ENCODE measurements at regions of chr1 and their contacts with region 1.

Region 1: GRCh38 chr1:25608488-25609178 is 8.0 kb upstream of the MAN1C1 start:
- DNase-seq: peak; percentile 72 to 94 (median 85)
- ATAC-seq: peak; percentile 96 to 99 (median 97)
- H3K4me3 ChIP-seq: no peak overlapping the region
- H3K4me3 Mint-ChIP-seq: peak overlapping the region in 1 of 3 donors; percentile 33
- H3K27ac ChIP-seq: no peak overlapping the region
- H3K27ac Mint-ChIP-seq: no peak overlapping the region
- H3K4me1 ChIP-seq: peaks cover 3 to 5% of the 10 kb centered on the region in 2 experiments
- H3K4me1 Mint-ChIP-seq: peaks cover 13 to 15% (median 15%) of the 10 kb centered on the region in 3 donors
- H3K27me3 ChIP-seq: peaks cover 0 to 3% of the 10 kb centered on the region in 2 experiments
- H3K27me3 Mint-ChIP-seq: peaks cover 0 to 3% of the 10 kb centered on the region in 2 donors

Region 2: DNA sequence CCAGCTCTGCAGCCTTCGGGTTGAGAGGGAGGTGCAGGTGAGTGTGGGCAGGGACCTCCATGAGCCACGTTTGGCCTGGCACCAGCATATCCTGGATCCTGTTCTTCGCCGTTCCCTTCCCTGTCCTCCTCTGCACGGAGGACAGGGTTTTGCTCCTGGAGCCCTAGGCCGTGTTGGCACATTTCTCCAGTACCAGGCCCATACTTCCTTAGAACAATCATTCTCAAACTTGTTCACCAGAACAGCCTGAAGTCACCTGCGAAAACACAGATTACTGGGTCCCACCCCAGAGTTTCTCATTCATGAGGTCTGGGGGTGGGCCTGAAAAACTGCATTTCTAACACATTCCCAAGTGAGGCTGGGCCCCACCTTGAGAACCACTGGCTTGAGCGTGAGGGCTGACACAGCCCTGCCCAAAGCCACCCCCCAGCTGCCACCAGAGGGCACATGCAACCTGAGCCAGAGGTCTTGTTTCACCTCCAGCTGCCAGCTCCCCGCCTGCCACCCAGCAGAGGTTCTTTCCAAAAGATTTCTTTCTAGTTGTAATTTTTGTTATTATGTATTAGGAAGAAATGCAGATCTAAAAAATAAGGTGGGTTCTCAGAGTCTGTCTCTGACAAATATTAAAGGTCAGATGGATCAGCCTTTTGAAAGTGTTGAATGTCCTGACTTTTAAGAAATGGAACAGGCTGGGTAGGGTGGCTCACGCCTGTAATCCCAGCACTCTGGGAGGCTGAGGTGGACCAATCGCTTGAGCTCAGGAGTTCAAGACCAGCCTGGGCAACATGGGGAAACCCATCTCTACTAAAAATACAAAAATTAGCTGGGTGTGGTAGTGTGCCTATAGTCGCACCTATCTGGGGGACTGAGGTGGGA is 104.8 kb before region 1 on chr1:
- CTCF ChIA-PET with region 1: no interaction called
- POLR2A ChIA-PET with region 1: no interaction called
- DNase-seq: peak; percentile 55 to 83 (median 73)
- ATAC-seq: peak; percentile 94 to 98 (median 96)
- H3K4me3 ChIP-seq: no peak overlapping the region
- H3K4me3 Mint-ChIP-seq: no peak overlapping the region
- H3K27ac ChIP-seq: no peak overlapping the region
- H3K27ac Mint-ChIP-seq: peak overlapping the region; percentile 77 to 80
- H3K4me1 ChIP-seq: peaks cover 8 to 26% of the 10 kb centered on the region in 2 experiments
- H3K4me1 Mint-ChIP-seq: peaks cover 24 to 34% (median 32%) of the 10 kb centered on the region in 3 donors
- H3K27me3 ChIP-seq: no peaks in the 10 kb centered on the region
- H3K27me3 Mint-ChIP-seq: no peaks in the 10 kb centered on the region

Region 3: DNA sequence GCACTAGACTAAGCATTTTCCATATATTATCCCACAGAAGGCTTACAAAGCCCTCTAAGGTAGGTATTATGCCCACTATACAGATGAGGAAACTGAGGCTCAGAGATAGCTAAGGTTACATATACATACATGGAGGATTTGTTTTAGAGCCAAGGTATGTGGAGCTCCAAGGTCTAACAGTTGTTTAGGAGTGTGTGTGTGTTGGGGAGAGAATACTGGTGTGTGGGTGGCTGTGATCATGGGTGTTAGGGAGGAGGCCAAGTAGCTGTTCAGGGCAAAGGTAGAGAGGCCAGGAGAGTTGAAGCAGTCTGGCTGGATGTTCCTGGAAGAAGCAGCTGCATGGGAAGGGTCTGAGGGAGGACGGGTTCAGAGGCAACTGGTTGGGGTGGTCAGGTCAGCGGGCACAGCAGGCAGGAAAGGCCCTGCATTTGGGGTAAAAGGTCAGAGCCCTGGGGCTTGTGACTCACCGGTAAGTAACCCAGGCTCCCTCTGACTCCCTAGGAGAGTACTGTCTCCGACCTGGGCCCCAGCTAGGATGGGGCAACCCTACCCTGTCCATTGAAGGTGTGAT is 70.4 kb before region 1 on chr1:
- CTCF ChIA-PET with region 1: no interaction called
- POLR2A ChIA-PET with region 1: interaction called in 1 of 2 experiments, 13 read pairs
- DNase-seq: no peak
- ATAC-seq: no peak
- H3K4me3 ChIP-seq: no peak overlapping the region
- H3K4me3 Mint-ChIP-seq: no peak overlapping the region
- H3K27ac ChIP-seq: no peak overlapping the region
- H3K27ac Mint-ChIP-seq: peak overlapping the region in 1 of 2 donors; percentile 17
- H3K4me1 ChIP-seq: peaks cover 0 to 3% of the 10 kb centered on the region in 2 experiments
- H3K4me1 Mint-ChIP-seq: peaks cover 3 to 9% (median 6%) of the 10 kb centered on the region in 3 donors
- H3K27me3 ChIP-seq: no peaks in the 10 kb centered on the region
- H3K27me3 Mint-ChIP-seq: no peaks in the 10 kb centered on the region

Region 4: GRCh38 chr1:25642574-25643108 is 34.0 kb after region 1 on chr1:
- CTCF ChIA-PET with region 1: interaction called in 1 of 2 experiments, 11 read pairs
- POLR2A ChIA-PET with region 1: no interaction called
- DNase-seq: peak in 34 of 35 experiments; percentile 51 to 86 (median 75)
- ATAC-seq: peak; percentile 91 to 96 (median 94)
- H3K4me3 ChIP-seq: peak overlapping the region; percentile 25 to 64
- H3K4me3 Mint-ChIP-seq: peak overlapping the region; percentile 60 to 77 (median 64)
- H3K27ac ChIP-seq: peak overlapping the region; percentile 75
- H3K27ac Mint-ChIP-seq: peak overlapping the region; percentile 91 to 92
- H3K4me1 ChIP-seq: peaks cover 61 to 63% of the 10 kb centered on the region in 2 experiments
- H3K4me1 Mint-ChIP-seq: peaks cover 87 to 89% (median 88%) of the 10 kb centered on the region in 3 donors
- H3K27me3 ChIP-seq: peaks cover 0 to 4% of the 10 kb centered on the region in 2 experiments
- H3K27me3 Mint-ChIP-seq: no peaks in the 10 kb centered on the region

Region 5: GRCh38 chr1:25675729-25676476 is 67.3 kb after region 1 on chr1:
- CTCF ChIA-PET with region 1: interaction called in 1 of 2 experiments, 11 read pairs
- POLR2A ChIA-PET with region 1: interaction called in 1 of 2 experiments, 3 read pairs
- DNase-seq: peak; percentile 50 to 84 (median 70)
- ATAC-seq: peak; percentile 85 to 90 (median 89)
- H3K4me3 ChIP-seq: peak overlapping the region; percentile 25 to 29
- H3K4me3 Mint-ChIP-seq: peak overlapping the region; percentile 65 to 79 (median 74)
- H3K27ac ChIP-seq: peak overlapping the region; percentile 46
- H3K27ac Mint-ChIP-seq: peak overlapping the region; percentile 91 to 93
- H3K4me1 ChIP-seq: peaks cover 68 to 69% of the 10 kb centered on the region in 2 experiments
- H3K4me1 Mint-ChIP-seq: peaks cover 91 to 93% (median 92%) of the 10 kb centered on the region in 3 donors
- H3K27me3 ChIP-seq: no peaks in the 10 kb centered on the region
- H3K27me3 Mint-ChIP-seq: no peaks in the 10 kb centered on the region

Region 6: DNA sequence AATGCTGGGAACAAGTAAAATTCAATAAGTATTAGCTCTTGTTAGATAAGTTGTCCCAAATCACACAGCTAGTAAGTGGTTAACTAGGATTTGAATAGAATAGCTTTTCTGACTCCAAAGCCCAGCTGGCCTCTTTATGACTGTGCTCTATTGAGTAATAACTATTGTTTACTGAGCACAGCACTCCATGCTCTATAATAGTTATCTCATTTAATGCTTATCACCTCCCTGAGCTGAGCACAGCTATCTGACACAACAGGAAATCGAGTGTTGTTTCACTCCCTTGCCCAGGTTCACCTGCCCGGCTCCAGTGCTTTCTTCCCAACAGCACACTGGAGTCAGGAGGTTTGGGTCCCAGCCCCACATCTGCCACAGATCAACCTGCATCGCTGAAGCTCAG is 336.4 kb after region 1 on chr1:
- CTCF ChIA-PET with region 1: no interaction called
- POLR2A ChIA-PET with region 1: no interaction called
- DNase-seq: no peak
- ATAC-seq: no peak
- H3K4me3 ChIP-seq: no peak overlapping the region
- H3K4me3 Mint-ChIP-seq: no peak overlapping the region
- H3K27ac ChIP-seq: no peak overlapping the region
- H3K27ac Mint-ChIP-seq: no peak overlapping the region
- H3K4me1 ChIP-seq: no peaks in the 10 kb centered on the region
- H3K4me1 Mint-ChIP-seq: no peaks in the 10 kb centered on the region
- H3K27me3 ChIP-seq: peaks cover 0 to 7% of the 10 kb centered on the region in 2 experiments
- H3K27me3 Mint-ChIP-seq: no peaks in the 10 kb centered on the region